Sigmoid colon (tissue), 7 donors: ENCODE measurements at regions of chr14 and their contacts with region 1.

Region 1: GRCh38 chr14:93939304-93940229 is 12.4 kb downstream of the FAM181A start:
- DNase-seq: peak; percentile 91
- H3K4me3 ChIP-seq: peak overlapping the region in 2 of 4 donors; percentile 6 to 27
- H3K27ac ChIP-seq: peak overlapping the region; percentile 55 to 92 (median 76)
- H3K4me1 ChIP-seq: peaks cover 0 to 54% (median 34%) of the 10 kb centered on the region in 4 donors
- H3K27me3 ChIP-seq: no peaks in the 10 kb centered on the region
- CTCF ChIP-seq: peak; percentile 40 to 82 (median 61)
- EP300 ChIP-seq: no peak
- POLR2A ChIP-seq: no peak

Region 2: GRCh38 chr14:94001501-94002396 is 62.2 kb after region 1 on chr14:
- intact Hi-C with region 1: loop called (anchors 1 kb)
- DNase-seq: peak; percentile 82
- H3K4me3 ChIP-seq: no peak overlapping the region
- H3K27ac ChIP-seq: peak overlapping the region in 2 of 4 donors; percentile 1 to 67
- H3K4me1 ChIP-seq: peaks cover 0 to 19% (median 12%) of the 10 kb centered on the region in 4 donors
- H3K27me3 ChIP-seq: no peaks in the 10 kb centered on the region
- CTCF ChIP-seq: peak; percentile 82 to 97 (median 96)
- EP300 ChIP-seq: no peak
- POLR2A ChIP-seq: no peak